ENCODE measurements at regions of chr11 and their contacts with region 1.

Region 1: DNA sequence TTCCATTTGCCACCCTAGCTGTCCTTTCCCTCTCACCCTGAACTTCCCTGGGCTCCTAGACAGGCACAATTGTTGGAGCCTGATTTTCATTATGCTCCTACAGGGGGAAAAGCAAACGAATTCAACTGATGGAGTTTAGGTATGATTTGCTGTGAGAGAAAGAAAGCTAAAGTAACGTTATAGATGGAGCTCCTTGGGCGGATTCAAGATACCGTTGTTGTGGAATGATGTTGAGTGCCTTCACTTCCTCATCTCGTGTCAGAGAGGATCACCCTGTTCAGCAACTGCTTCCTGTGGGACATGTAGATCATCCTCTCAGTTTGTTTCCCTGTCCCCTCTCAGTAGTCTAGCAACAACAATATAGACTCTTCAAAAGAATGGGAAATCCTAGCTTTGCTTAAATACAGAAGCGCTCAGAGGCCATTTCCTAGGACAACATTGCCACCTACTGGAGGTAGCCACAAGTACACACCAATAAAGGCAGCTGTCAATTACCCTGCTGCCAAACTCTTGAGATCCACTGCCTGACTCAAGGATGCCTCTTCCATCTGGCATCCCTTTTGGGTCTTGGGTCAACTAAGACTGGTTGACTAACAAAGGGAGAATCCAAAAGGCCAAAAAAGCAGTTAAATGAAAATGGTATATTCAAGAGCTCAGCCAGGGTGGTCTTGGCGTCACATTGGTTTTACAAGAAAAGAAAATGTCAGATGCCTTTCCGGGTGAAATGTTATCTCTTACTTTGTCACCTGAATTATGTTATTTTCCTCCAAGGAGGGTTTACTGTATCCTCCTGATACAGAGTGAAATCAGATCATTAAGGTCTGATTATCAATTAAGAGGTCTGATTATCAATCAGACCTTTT is 13.5 kb upstream of the DTX4 start:
- DNase-seq: no peak
- H3K4me3 ChIP-seq: no peak overlapping the region
- H3K27ac ChIP-seq: no peak overlapping the region
- H3K4me1 ChIP-seq: no peaks in the 10 kb centered on the region
- H3K27me3 ChIP-seq: no peaks in the 10 kb centered on the region
- CTCF ChIP-seq: peak; percentile 65 to 84 (median 80)

Region 2: GRCh38 chr11:58609723-58610122 is 548.7 kb before region 1 on chr11:
- dilution Hi-C with region 1: loop called (anchors 10 kb)
- DNase-seq: no peak
- H3K4me3 ChIP-seq: no peak overlapping the region
- H3K27ac ChIP-seq: no peak overlapping the region
- H3K4me1 ChIP-seq: no peaks in the 10 kb centered on the region
- H3K27me3 ChIP-seq: no peaks in the 10 kb centered on the region
- CTCF ChIP-seq: no peak

Region 3: DNA sequence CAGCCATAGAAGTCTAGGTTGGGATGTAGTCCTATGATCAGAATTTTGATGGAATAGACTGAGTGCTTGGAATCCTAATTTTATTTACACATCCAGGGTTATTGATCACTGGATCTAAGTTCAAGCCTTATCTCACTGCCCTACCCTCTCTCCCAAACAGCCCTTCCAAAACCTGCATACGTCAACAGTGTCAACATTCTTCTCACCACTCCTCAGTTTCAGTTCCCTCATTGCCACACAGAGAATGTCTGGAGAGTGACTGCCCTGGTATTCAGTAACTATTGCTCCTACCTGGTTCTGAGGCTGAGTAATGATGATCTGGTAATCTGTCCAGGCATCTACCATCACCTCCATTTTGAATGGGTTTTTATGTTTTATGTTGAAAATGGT is 159.2 kb before region 1 on chr11:
- dilution Hi-C with region 1: no loop called
- DNase-seq: no peak
- H3K4me3 ChIP-seq: no peak overlapping the region
- H3K27ac ChIP-seq: no peak overlapping the region
- H3K4me1 ChIP-seq: no peaks in the 10 kb centered on the region
- H3K27me3 ChIP-seq: no peaks in the 10 kb centered on the region
- CTCF ChIP-seq: no peak